Left cardiac atrium (tissue), 4 donors: ENCODE measurements at regions of chr19 and their contacts with region 1.

Region 1: GRCh38 chr19:17429641-17430113 is 9.8 kb downstream of the MVB12A start:
- DNase-seq: no peak
- ATAC-seq: no peak

Region 2: DNA sequence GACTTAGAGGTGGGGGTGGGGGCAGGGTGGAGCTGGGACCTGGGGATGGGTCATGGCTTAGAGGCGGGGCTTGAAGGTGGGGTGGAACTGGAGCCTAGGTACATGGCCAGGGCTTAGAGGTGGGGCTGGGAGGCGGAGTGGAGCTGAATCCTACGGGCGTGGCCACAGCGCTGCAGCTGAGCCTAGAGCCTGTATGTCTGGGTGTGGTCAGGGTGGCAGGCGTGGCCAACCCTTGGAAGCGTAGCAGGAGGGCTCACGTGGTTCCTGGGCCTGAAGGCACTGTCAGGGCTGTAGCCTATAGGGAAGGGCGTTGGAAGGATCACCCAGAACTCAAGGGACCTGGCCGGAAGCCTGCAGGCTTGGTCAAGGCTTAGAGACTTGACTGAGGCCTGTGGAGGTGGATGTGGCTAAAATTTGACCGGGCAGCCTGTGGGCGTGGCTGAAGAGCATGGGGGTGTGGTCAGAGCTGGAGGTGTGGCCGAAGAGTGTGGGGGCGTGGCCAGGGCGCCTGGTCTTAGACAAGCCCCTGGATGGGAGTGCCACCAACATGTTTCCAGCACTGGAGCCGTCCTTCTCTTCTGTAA is 150.1 kb after region 1 on chr19:
- intact Hi-C with region 1: loop called in 1 of 2 experiments (anchors 10 kb)
- DNase-seq: peak; percentile 68
- ATAC-seq: peak; percentile 71 to 80